Activated CD4-positive, alpha-beta T cell treated with anti-CD3 and anti-CD28 coated beads for 36 hours (primary cell): ENCODE measurements at regions of chr6 and their contacts with region 1.

Region 1: GRCh38 chr6:134938896-134939295 is 11.0 kb downstream of the ALDH8A1 start:
- DNase-seq: peak; percentile 83
- ATAC-seq: peak; percentile 98
- H3K4me3 Mint-ChIP-seq: no peak overlapping the region
- H3K27ac Mint-ChIP-seq: peak overlapping the region; percentile 44
- H3K4me1 Mint-ChIP-seq: peaks cover 11% of the 10 kb centered on the region
- H3K27me3 Mint-ChIP-seq: no peaks in the 10 kb centered on the region

Region 2: DNA sequence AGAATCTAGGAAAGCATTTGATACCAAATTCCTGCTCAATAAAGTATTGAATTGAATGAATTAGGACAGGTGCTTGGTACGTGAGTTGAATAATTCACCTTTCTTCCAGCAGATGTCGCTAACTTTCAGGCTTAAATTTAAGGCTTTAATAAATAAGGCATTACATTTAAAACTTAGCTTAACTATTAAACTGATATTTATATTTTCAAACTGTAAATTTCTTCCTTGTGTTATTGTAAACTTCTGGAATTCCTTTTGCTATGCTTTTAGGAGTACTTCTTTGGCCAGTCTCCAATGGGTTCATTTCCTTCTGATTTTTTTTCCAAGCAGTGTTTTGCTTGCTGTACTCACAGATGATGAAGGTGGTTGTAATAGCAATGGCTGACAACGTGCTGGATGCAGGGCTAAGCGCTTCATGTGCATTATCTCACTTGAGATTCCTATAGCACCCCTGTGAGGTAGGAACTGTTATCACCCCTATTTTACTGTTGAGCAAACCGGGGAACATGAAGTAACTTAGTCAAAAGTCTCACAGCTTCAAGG is 815.2 kb before region 1 on chr6:
- CTCF ChIA-PET with region 1: interaction called, 19 read pairs
- POLR2A ChIA-PET with region 1: no interaction called
- intact Hi-C with region 1: loop called in 1 of 2 experiments (anchors 1 kb)
- DNase-seq: peak; percentile 34
- ATAC-seq: peak; percentile 97
- H3K4me3 Mint-ChIP-seq: no peak overlapping the region
- H3K27ac Mint-ChIP-seq: peak overlapping the region; percentile 51
- H3K4me1 Mint-ChIP-seq: peaks cover 2% of the 10 kb centered on the region
- H3K27me3 Mint-ChIP-seq: no peaks in the 10 kb centered on the region

Region 3: DNA sequence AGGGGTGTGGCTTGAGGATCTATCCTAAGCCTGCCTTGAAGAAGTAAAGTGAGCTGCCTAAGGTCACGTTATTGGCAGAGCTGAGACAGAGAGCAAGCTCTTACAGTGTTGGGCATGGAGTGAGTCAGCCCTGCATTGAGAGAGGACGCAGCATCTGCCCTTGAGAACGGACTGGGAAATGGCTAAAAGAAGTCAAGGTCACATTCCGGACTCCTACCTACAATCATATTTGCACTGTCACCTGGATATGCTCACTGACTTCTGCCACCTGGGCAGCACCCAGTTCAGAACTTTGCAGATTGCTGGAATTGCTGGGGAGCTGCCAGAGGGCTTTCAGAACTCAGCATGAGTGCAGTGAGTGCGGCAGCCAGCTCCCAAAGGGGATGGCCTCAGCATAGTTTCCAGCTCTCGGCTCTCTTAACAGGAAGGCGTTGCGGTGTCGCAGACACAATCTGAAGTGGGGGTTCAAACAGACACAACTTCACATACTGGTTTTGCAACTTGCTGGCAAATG is 421.7 kb before region 1 on chr6:
- CTCF ChIA-PET with region 1: no interaction called
- POLR2A ChIA-PET with region 1: no interaction called
- intact Hi-C with region 1: no loop called
- DNase-seq: no peak
- ATAC-seq: no peak
- H3K4me3 Mint-ChIP-seq: no peak overlapping the region
- H3K27ac Mint-ChIP-seq: no peak overlapping the region
- H3K4me1 Mint-ChIP-seq: peaks cover 20% of the 10 kb centered on the region
- H3K27me3 Mint-ChIP-seq: no peaks in the 10 kb centered on the region

Region 4: DNA sequence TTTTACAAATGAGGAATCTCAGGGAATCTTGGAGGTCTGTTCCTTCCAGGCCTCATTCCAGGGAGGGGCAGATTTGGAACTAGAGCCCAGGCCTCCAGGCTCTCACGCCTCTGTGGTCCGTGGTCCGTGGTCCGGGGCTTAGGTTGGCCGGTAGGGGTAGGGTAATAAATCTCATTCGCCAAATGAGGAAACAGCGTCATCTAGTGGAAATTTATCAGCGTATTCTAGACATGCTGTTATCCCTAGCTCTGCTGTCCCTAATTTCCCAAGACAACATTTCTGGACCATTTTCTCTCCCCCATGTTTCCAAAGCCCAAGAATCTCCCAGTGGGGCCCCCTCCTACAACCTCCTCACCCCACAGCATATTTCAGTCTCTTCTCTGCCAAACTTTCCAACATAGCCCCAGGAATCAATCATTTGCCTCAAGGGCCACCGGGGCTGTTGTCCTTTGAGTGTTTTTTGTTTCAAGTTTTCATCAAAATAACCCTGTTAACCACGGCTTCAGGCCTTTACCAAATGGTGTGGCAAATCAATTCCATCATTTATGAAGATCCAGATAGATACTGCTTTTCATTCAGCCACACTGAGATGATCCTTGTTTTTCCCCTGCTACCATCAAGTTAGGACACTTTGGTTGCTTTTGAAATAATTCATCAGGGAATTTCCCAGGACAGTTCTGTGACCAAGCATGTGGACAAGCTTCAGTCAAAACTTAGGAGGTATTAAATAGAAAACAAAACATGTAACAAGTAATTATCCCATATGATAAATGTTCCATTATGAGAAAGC is 115.8 kb before region 1 on chr6:
- CTCF ChIA-PET with region 1: interaction called, 27 read pairs
- POLR2A ChIA-PET with region 1: no interaction called
- intact Hi-C with region 1: loop called (anchors 2 to 5 kb)
- DNase-seq: peak; percentile 36
- ATAC-seq: peak; percentile 86
- H3K4me3 Mint-ChIP-seq: no peak overlapping the region
- H3K27ac Mint-ChIP-seq: no peak overlapping the region
- H3K4me1 Mint-ChIP-seq: peaks cover 4% of the 10 kb centered on the region
- H3K27me3 Mint-ChIP-seq: peaks cover 2% of the 10 kb centered on the region

Region 5: GRCh38 chr6:134853111-134854055 is 85.5 kb before region 1 on chr6:
- CTCF ChIA-PET with region 1: no interaction called
- POLR2A ChIA-PET with region 1: no interaction called
- intact Hi-C with region 1: no loop called
- DNase-seq: no peak
- ATAC-seq: no peak
- H3K4me3 Mint-ChIP-seq: no peak overlapping the region
- H3K27ac Mint-ChIP-seq: no peak overlapping the region
- H3K4me1 Mint-ChIP-seq: no peaks in the 10 kb centered on the region
- H3K27me3 Mint-ChIP-seq: no peaks in the 10 kb centered on the region

Region 6: GRCh38 chr6:134903448-134903847 is 35.4 kb before region 1 on chr6:
- CTCF ChIA-PET with region 1: interaction called, 12 read pairs
- POLR2A ChIA-PET with region 1: interaction called, 6 read pairs
- intact Hi-C with region 1: no loop called
- DNase-seq: no peak
- ATAC-seq: no peak
- H3K4me3 Mint-ChIP-seq: no peak overlapping the region
- H3K27ac Mint-ChIP-seq: no peak overlapping the region
- H3K4me1 Mint-ChIP-seq: no peaks in the 10 kb centered on the region
- H3K27me3 Mint-ChIP-seq: no peaks in the 10 kb centered on the region

Region 7: GRCh38 chr6:134995536-134995935 is 56.6 kb after region 1 on chr6:
- CTCF ChIA-PET with region 1: interaction called, 11 read pairs
- POLR2A ChIA-PET with region 1: no interaction called
- intact Hi-C with region 1: no loop called
- DNase-seq: no peak
- ATAC-seq: no peak
- H3K4me3 Mint-ChIP-seq: no peak overlapping the region
- H3K27ac Mint-ChIP-seq: no peak overlapping the region
- H3K4me1 Mint-ChIP-seq: peaks cover 19% of the 10 kb centered on the region
- H3K27me3 Mint-ChIP-seq: no peaks in the 10 kb centered on the region